Activated CD4-positive, alpha-beta T cell treated with anti-CD3 and anti-CD28 coated beads for 36 hours (primary cell): ENCODE measurements at regions of chr21 and their contacts with region 1.

Region 1: GRCh38 chr21:34526618-34527290 is 14.7 kb upstream of the KCNE1 start:
- DNase-seq: peak; percentile 71
- ATAC-seq: peak; percentile 85
- H3K4me3 Mint-ChIP-seq: peak overlapping the region; percentile 55
- H3K27ac Mint-ChIP-seq: peak overlapping the region; percentile 85
- H3K4me1 Mint-ChIP-seq: peaks cover 35% of the 10 kb centered on the region
- H3K27me3 Mint-ChIP-seq: peaks cover 2% of the 10 kb centered on the region

Region 2: DNA sequence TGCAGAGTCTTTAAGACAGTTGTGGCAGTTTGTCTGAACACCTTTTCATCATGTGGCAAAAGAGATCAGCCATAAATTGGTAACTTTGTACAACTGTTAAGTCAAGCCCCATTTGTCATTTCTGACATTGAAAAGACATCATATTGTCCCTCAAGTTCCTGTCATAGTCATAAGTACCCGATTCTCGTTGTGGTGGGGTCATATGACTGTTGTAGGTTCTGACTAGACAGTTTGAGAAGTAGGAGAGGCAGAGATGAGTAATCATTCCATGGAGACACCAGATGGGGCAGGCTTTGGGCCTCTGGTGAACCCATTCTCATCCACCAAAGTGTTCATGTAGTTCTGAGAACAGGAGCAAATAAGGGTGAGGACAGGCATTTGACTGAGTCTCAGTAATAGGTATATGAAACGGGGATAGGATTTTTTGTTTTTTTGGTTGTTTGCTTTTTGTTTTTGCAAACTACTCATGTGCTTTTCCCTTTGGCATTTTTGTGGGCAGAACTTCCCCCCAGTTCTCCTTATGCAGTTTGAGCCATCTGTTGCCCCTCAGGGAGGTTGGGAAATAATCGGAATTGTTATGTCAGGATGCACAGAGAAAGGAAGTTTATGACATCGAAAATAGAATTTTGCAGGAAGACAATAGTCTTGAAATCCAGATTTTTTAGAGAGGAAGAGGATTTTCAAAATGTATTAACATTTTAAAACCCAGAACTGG is 249.9 kb before region 1 on chr21:
- CTCF ChIA-PET with region 1: no interaction called
- POLR2A ChIA-PET with region 1: no interaction called
- intact Hi-C with region 1: no loop called
- DNase-seq: peak; percentile 66
- ATAC-seq: peak; percentile 97
- H3K4me3 Mint-ChIP-seq: no peak overlapping the region
- H3K27ac Mint-ChIP-seq: peak overlapping the region; percentile 9
- H3K4me1 Mint-ChIP-seq: peaks cover 8% of the 10 kb centered on the region
- H3K27me3 Mint-ChIP-seq: peaks cover 8% of the 10 kb centered on the region

Region 3: GRCh38 chr21:34553151-34553952 is 26.6 kb after region 1 on chr21:
- CTCF ChIA-PET with region 1: interaction called, 5 read pairs
- POLR2A ChIA-PET with region 1: no interaction called
- intact Hi-C with region 1: loop called in 1 of 2 experiments (anchors 2 kb)
- DNase-seq: no peak
- ATAC-seq: peak; percentile 44
- H3K4me3 Mint-ChIP-seq: no peak overlapping the region
- H3K27ac Mint-ChIP-seq: no peak overlapping the region
- H3K4me1 Mint-ChIP-seq: peaks cover 16% of the 10 kb centered on the region
- H3K27me3 Mint-ChIP-seq: no peaks in the 10 kb centered on the region

Region 4: GRCh38 chr21:34639882-34640788 is 113.4 kb after region 1 on chr21:
- CTCF ChIA-PET with region 1: no interaction called
- POLR2A ChIA-PET with region 1: no interaction called
- intact Hi-C with region 1: loop called in 1 of 2 experiments (anchors 2 kb)
- DNase-seq: peak; percentile 65
- ATAC-seq: peak; percentile 77
- H3K4me3 Mint-ChIP-seq: peak overlapping the region; percentile 32
- H3K27ac Mint-ChIP-seq: peak overlapping the region; percentile 72
- H3K4me1 Mint-ChIP-seq: peaks cover 24% of the 10 kb centered on the region
- H3K27me3 Mint-ChIP-seq: no peaks in the 10 kb centered on the region

Region 5: DNA sequence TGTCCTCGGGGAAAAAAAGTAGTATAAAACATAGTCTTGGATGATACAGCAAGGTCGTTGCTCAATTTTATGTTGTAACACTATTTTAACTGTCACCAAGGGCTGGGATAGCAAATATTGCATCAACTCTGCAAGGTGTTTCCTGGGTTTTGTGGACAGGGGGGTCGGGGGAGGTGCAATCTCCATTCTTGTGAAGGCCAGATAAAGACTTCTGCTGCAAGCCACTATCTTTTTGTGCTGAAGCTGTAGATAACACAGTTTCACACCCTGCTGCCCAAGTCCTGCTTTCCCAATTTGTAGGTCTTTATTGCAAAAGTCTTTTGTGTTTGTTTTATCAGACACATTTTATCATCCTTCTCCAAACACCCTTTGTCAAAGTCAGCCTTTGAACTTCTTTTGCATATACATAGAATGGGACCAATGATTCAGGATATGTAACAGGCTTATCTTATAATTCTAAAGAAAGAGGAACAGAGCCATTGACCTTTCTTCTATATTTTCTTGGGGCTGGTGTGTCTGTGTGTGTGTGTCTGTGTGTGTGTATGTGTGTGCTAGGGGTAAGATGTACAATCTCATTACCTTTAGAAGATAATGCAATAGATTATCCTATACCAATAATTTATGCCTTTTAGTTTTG is 381.8 kb after region 1 on chr21:
- CTCF ChIA-PET with region 1: no interaction called
- POLR2A ChIA-PET with region 1: no interaction called
- intact Hi-C with region 1: no loop called
- DNase-seq: no peak
- ATAC-seq: no peak
- H3K4me3 Mint-ChIP-seq: no peak overlapping the region
- H3K27ac Mint-ChIP-seq: no peak overlapping the region
- H3K4me1 Mint-ChIP-seq: peaks cover 81% of the 10 kb centered on the region
- H3K27me3 Mint-ChIP-seq: no peaks in the 10 kb centered on the region